Activated B cell treated with CpG ODN at 0.5 μM for 24 hours (primary cell): ENCODE measurements at regions of chr9 and their contacts with region 1.

Region 1: DNA sequence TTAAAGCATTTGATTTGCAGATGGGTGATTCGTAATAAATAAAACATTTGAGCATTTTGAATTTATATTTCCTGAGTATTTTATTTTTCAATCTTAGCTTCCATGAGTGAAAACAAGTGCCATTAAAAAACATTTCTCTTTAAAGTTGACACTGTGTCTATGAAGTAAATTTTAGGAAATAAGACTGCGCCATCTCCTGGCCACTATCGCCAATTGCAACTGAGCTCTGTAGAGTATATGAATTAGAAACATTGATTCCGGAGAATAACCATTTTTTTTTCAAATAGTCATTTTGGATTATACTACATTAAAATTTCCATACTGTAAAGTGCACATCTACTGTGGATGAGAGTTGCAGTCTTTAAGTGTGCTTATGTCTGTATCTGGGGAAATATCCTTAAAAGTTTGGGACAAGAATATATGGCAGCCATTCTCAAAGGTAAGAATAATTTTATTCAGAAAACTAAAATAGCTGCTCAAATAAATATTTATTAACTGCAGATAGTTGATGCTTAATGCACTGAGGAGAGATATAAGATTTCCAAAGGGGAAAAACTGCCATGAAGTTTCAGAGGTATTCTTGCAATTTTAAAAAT is 5.9 kb downstream of the DMRTA1 start:
- DNase-seq: no peak
- ATAC-seq: peak; percentile 65
- H3K4me3 Mint-ChIP-seq: no peak overlapping the region
- H3K27ac Mint-ChIP-seq: no peak overlapping the region
- H3K4me1 Mint-ChIP-seq: peaks cover 9% of the 10 kb centered on the region
- H3K27me3 Mint-ChIP-seq: peaks cover 42% of the 10 kb centered on the region
- CTCF ChIP-seq: peak; percentile 90

Region 2: DNA sequence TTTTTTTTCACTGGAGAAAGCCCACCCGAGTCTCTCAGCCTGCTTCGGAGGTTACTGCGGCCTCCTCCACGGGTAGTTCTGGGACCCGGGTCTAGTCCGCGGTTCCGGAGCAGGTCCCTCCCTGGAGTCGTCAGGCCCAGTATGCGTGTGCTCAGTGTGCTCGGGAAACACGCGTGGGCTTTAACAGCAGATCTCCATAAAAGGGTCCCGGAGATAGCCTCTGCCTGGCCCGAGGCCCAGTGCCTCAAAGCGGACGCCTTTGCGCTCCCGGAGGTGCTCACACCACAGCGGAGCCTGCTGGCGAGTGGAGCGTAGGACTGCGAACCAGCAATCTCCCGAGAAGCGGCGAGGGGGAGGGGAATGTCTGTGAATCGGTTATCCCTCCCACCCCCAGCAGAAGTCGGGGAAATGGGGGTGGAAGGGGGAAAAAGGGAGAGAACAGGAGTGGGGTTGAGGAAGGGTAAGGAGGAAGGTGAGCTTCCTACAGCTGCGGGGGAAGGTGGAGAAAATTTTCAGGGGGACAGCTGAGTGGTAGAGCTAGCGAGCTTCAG is 487.0 kb before region 1 on chr9:
- CTCF ChIA-PET with region 1: no interaction called
- POLR2A ChIA-PET with region 1: no interaction called
- intact Hi-C with region 1: loop called (anchors 5 kb)
- DNase-seq: peak; percentile 41
- ATAC-seq: peak; percentile 67
- H3K4me3 Mint-ChIP-seq: peak overlapping the region; percentile 77
- H3K27ac Mint-ChIP-seq: peak overlapping the region; percentile 64
- H3K4me1 Mint-ChIP-seq: peaks cover 19% of the 10 kb centered on the region
- H3K27me3 Mint-ChIP-seq: peaks cover 74% of the 10 kb centered on the region
- CTCF ChIP-seq: no peak

Region 3: DNA sequence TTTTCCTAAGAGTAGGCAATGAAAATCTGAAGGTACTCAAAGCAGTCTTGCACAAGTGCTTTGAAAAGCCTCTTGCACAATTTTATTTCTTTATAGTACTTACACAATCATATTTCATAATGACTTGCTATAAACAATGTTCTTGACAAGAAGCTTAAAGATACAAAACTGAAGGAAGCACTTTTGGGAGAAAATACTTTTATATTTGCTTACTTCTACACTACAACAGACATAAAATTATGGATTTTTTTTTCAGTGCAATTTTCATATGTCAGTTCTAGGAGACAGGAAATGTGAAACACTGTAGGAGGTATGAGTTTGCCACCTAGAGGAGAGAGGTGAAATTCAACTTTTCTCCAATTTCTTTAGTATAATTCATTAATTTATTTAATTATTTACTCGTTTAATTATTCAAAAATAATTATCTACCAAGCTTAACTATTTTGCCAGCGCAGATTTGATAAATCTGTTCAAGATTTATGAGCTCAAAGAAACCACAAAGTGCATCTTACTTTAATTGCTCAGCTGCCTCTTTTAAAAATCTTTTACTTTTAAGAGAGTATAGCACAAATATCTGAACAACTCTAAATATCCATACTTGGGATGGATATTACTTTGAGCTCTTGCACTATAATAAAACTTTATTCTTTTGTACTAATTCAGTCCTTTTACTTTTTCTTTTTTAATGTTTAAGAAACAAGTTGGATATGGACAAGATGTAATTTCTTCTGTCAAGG is 414.4 kb before region 1 on chr9:
- CTCF ChIA-PET with region 1: interaction called, 11 read pairs
- POLR2A ChIA-PET with region 1: no interaction called
- intact Hi-C with region 1: loop called (anchors 1 kb)
- DNase-seq: no peak
- ATAC-seq: no peak
- H3K4me3 Mint-ChIP-seq: no peak overlapping the region
- H3K27ac Mint-ChIP-seq: no peak overlapping the region
- H3K4me1 Mint-ChIP-seq: no peaks in the 10 kb centered on the region
- H3K27me3 Mint-ChIP-seq: no peaks in the 10 kb centered on the region
- CTCF ChIP-seq: no peak

Region 4: GRCh38 chr9:22244141-22245011 is 208.1 kb before region 1 on chr9:
- CTCF ChIA-PET with region 1: interaction called, 33 read pairs
- POLR2A ChIA-PET with region 1: no interaction called
- intact Hi-C with region 1: loop called (anchors 1 kb)
- DNase-seq: no peak
- ATAC-seq: peak; percentile 54
- H3K4me3 Mint-ChIP-seq: no peak overlapping the region
- H3K27ac Mint-ChIP-seq: no peak overlapping the region
- H3K4me1 Mint-ChIP-seq: peaks cover 39% of the 10 kb centered on the region
- H3K27me3 Mint-ChIP-seq: peaks cover 15% of the 10 kb centered on the region
- CTCF ChIP-seq: no peak

Region 5: GRCh38 chr9:22307013-22307711 is 145.4 kb before region 1 on chr9:
- CTCF ChIA-PET with region 1: interaction called, 6 read pairs
- POLR2A ChIA-PET with region 1: no interaction called
- intact Hi-C with region 1: loop called (anchors 1 kb)
- DNase-seq: no peak
- ATAC-seq: no peak
- H3K4me3 Mint-ChIP-seq: no peak overlapping the region
- H3K27ac Mint-ChIP-seq: no peak overlapping the region
- H3K4me1 Mint-ChIP-seq: no peaks in the 10 kb centered on the region
- H3K27me3 Mint-ChIP-seq: peaks cover 7% of the 10 kb centered on the region
- CTCF ChIP-seq: no peak

Region 6: GRCh38 chr9:22425551-22425950 is 27.0 kb before region 1 on chr9:
- CTCF ChIA-PET with region 1: no interaction called
- POLR2A ChIA-PET with region 1: no interaction called
- intact Hi-C with region 1: no loop called
- DNase-seq: no peak
- ATAC-seq: no peak
- H3K4me3 Mint-ChIP-seq: no peak overlapping the region
- H3K27ac Mint-ChIP-seq: no peak overlapping the region
- H3K4me1 Mint-ChIP-seq: no peaks in the 10 kb centered on the region
- H3K27me3 Mint-ChIP-seq: peaks cover 2% of the 10 kb centered on the region
- CTCF ChIP-seq: no peak

Region 7: GRCh38 chr9:23194281-23194680 is 741.8 kb after region 1 on chr9:
- CTCF ChIA-PET with region 1: no interaction called
- POLR2A ChIA-PET with region 1: no interaction called
- intact Hi-C with region 1: no loop called
- DNase-seq: no peak
- ATAC-seq: no peak
- H3K4me3 Mint-ChIP-seq: no peak overlapping the region
- H3K27ac Mint-ChIP-seq: no peak overlapping the region
- H3K4me1 Mint-ChIP-seq: no peaks in the 10 kb centered on the region
- H3K27me3 Mint-ChIP-seq: no peaks in the 10 kb centered on the region
- CTCF ChIP-seq: no peak